HepG2 (cell line): ENCODE measurements at regions of chr13 and their contacts with region 1.

Region 1: GRCh38 chr13:31927219-31927653 is 104.3 kb upstream of the FRY start:
- DNase-seq: peak; percentile 19
- ATAC-seq: peak; percentile 79
- H3K4me3 ChIP-seq: peak overlapping the region; percentile 12 to 63 (median 42); a peak in 4 of 6 replicates
- H3K27ac ChIP-seq: peak overlapping the region; percentile 45
- H3K4me1 ChIP-seq: peaks cover 66% of the 10 kb centered on the region
- H3K27me3 ChIP-seq: no peaks in the 10 kb centered on the region
- CTCF ChIP-seq: peak; percentile 10; the same call in 1 of the 2 replicates
- EP300 ChIP-seq: no peak
- POLR2A ChIP-seq: no peak
- RAD21 ChIP-seq: no peak

Region 2: GRCh38 chr13:30334663-30335386 is 1592.4 kb before region 1 on chr13:
- CTCF ChIA-PET with region 1: no interaction called
- POLR2A ChIA-PET with region 1: no interaction called
- in situ Hi-C with region 1: no loop called
- intact Hi-C with region 1: no loop called
- DNase-seq: peak; percentile 80
- ATAC-seq: peak; percentile 98
- H3K4me3 ChIP-seq: peak overlapping the region in 1 of 3 experiments; percentile 45; a peak in 2 of 6 replicates
- H3K27ac ChIP-seq: no peak overlapping the region
- H3K4me1 ChIP-seq: peaks cover 18% of the 10 kb centered on the region
- H3K27me3 ChIP-seq: 0 out of 5 replicates have a peak, but pooled peaks cover 0 to 9% of the 10 kb centered on the region in 2 experiments
- CTCF ChIP-seq: peak; percentile 92
- EP300 ChIP-seq: no peak
- POLR2A ChIP-seq: no peak
- RAD21 ChIP-seq: peak; percentile 85

Region 3: DNA sequence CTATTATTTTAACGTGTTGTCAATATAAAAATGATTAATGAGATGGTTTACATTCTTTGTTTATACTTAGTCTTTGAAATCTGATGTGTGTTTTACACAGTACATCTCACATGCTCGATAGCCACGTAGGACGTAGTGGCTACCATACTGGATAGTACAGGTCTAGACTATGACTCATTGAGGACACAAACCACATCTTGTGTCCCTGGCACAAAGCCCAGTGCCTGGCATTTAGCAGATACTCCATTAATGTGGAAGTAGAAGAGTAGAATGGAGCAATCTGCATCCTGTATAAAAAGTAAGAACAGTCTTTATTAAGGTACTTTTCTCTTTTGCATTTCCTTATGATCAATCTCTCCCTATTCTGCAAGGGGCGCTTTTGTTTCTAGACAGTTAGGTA is 55.3 kb after region 1 on chr13:
- CTCF ChIA-PET with region 1: no interaction called
- POLR2A ChIA-PET with region 1: no interaction called
- in situ Hi-C with region 1: no loop called
- intact Hi-C with region 1: loop called (anchors 5 kb)
- DNase-seq: peak; percentile 67
- ATAC-seq: peak; percentile 38; the same call in 1 of the 3 replicates
- H3K4me3 ChIP-seq: no peak overlapping the region
- H3K27ac ChIP-seq: no peak overlapping the region
- H3K4me1 ChIP-seq: peaks cover 40% of the 10 kb centered on the region
- H3K27me3 ChIP-seq: peaks cover 0 to 7% of the 10 kb centered on the region in 2 experiments; a peak in 2 of 5 replicates
- CTCF ChIP-seq: no peak
- EP300 ChIP-seq: no peak
- POLR2A ChIP-seq: no peak
- RAD21 ChIP-seq: no peak